ENCODE measurements at regions of chr16 and their contacts with region 1.

Region 1: GRCh38 chr16:27549859-27550581 is at the starts of genes GTF3C1 and KATNIP:
- DNase-seq: peak; percentile 99
- H3K4me3 ChIP-seq: peak within 1 kb of the TSS; percentile 75 to 89 (median 89)
- H3K27ac ChIP-seq: peak within 1 kb of the TSS; percentile 93
- H3K4me1 ChIP-seq: peaks cover 14% of the 10 kb centered on the region
- H3K27me3 ChIP-seq: no peaks in the 10 kb centered on the region
- CTCF ChIP-seq: no peak
- POLR2A ChIP-seq: peak; percentile 86
- total RNA-seq, gene GTF3C1: 79.3 and 86.1 TPM in 2 replicates
- total RNA-seq, gene KATNIP: 26.8 and 30.7 TPM in 2 replicates

Region 2: GRCh38 chr16:27520982-27521673 is 28.9 kb before region 1 on chr16:
- CTCF ChIA-PET with region 1: no interaction called
- POLR2A ChIA-PET with region 1: no interaction called
- dilution Hi-C with region 1: no loop called
- intact Hi-C with region 1: no loop called
- DNase-seq: peak; percentile 77
- H3K4me3 ChIP-seq: no peak overlapping the region
- H3K27ac ChIP-seq: peak overlapping the region; percentile 59
- H3K4me1 ChIP-seq: peaks cover 10% of the 10 kb centered on the region
- H3K27me3 ChIP-seq: no peaks in the 10 kb centered on the region
- CTCF ChIP-seq: no peak
- POLR2A ChIP-seq: no peak

Region 3: GRCh38 chr16:27566417-27566816 is 16.4 kb after region 1 on chr16:
- CTCF ChIA-PET with region 1: interaction called, 5 read pairs
- POLR2A ChIA-PET with region 1: interaction called, 13 read pairs
- dilution Hi-C with region 1: no loop called
- intact Hi-C with region 1: no loop called
- DNase-seq: no peak
- H3K4me3 ChIP-seq: no peak overlapping the region
- H3K27ac ChIP-seq: no peak overlapping the region
- H3K4me1 ChIP-seq: no peaks in the 10 kb centered on the region
- H3K27me3 ChIP-seq: no peaks in the 10 kb centered on the region
- CTCF ChIP-seq: no peak
- POLR2A ChIP-seq: no peak

Region 4: DNA sequence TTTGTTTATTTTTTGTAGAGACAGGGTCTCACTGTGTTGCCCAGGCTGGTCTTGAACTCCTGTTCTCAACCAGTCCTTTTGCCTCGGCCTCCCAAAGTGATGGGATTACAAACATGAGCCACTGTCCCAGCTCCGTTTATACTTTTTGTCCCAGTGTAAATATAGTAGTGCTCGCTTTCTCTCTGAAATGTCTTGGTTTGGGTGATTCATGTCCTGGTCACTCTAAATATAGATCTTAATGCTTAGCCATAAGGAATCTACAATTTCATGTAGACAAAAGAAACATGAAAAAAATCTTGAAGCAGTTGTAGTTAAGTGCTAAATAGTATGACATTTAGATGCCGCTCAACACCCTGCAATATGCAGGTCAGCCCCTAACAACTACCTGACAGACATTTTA is 126.8 kb after region 1 on chr16:
- CTCF ChIA-PET with region 1: no interaction called
- POLR2A ChIA-PET with region 1: no interaction called
- dilution Hi-C with region 1: no loop called
- intact Hi-C with region 1: no loop called
- DNase-seq: peak; percentile 20
- H3K4me3 ChIP-seq: no peak overlapping the region
- H3K27ac ChIP-seq: peak overlapping the region; percentile 66
- H3K4me1 ChIP-seq: peaks cover 10% of the 10 kb centered on the region
- H3K27me3 ChIP-seq: no peaks in the 10 kb centered on the region
- CTCF ChIP-seq: no peak
- POLR2A ChIP-seq: no peak

Measured in endothelial cell of umbilical vein (primary cell).